ENCODE measurements at regions of chr11 and their contacts with region 1.

Region 1: DNA sequence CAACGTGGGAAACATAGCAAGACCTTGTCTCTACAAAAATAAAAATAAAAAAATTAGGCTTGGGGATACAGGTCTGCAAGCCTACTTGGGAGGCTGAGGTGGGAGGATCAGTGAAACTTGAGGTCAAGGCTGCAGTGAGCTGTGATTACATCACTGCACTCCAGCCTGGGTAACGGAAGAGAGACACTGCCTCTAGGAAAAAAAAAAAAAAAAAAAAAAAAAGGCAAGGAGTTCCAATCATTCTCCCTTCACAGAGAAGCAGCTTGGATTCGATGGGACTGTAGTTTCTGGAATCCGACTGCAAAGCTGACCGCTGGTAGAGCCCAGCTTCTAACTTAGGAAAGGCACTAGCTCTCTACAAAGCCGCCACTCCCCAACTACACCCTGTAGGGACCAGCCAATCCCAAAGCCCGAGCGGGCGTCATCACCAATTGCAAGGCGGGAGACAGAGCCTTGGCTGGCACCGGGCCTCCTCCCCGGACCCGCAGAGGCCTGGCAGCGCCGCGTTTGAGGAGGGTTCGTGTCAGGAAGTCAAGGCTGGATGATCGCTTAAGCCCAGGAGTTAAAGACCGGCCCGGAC is 699 bp upstream of the DDB2 start:
- DNase-seq: peak; percentile 64 to 90 (median 84)
- ATAC-seq: peak; percentile 67
- H3K4me3 ChIP-seq: peak overlapping the region; percentile 65 to 95
- H3K4me3 Mint-ChIP-seq: peak overlapping the region; percentile 96
- H3K27ac ChIP-seq: peak overlapping the region; percentile 85 to 93
- H3K27ac Mint-ChIP-seq: peak overlapping the region; percentile 97
- H3K4me1 ChIP-seq: peaks cover 16% of the 10 kb centered on the region
- H3K4me1 Mint-ChIP-seq: peaks cover 31% of the 10 kb centered on the region
- H3K27me3 ChIP-seq: no peaks in the 10 kb centered on the region
- H3K27me3 Mint-ChIP-seq: no peaks in the 10 kb centered on the region
- CTCF ChIP-seq: no peak

Region 2: DNA sequence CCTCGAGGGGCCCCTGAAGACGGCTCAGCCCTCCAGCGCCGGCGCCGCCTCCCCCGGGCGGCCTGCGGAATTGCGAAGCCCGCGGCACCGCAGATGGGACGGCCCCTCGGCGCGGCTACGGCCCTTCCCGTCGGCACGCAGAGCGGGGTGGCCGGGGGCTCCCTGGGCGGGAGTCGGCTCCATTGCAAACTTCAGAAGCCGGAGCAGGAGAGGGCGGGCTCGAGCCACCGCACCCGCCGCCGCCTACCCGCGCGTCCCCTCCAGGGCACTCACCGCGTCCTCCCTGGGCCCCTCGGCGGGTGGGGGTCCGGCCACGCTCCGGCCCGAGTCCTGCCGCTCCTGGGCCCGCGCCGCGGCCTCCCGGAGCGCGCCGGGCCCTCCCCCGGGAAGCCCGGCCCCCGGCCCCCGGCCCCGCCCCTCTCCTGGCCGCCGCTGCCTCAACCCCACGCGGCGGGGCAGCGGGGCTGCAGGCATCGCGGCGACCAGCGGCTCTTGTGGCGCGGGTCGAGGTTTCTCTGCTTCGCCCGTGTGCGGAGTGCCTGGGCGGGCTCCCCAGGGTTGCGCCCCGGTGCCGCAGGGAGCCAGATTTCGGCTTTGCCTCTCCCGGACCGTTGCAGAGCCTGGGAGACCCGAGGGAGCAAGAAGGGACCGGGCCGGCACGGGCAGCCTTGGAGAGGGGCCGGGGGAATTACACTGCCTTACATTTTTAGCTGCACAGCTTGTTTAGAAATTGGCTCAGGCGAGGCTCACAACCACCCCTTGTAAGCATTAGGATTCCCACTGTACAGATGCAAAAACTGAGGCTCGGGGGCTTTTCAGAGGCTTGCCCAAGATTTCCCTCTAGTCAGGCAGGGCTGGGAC is 27.8 kb before region 1 on chr11 and contains the start of gene PACSIN3:
- CTCF ChIA-PET with region 1: no interaction called
- POLR2A ChIA-PET with region 1: interaction called, 5 read pairs
- intact Hi-C with region 1: loop called in 1 of 2 experiments (anchors 2 kb)
- DNase-seq: peak in 6 of 9 experiments; percentile 20 to 57 (median 43)
- ATAC-seq: peak; percentile 63
- H3K4me3 ChIP-seq: peak within 1 kb of the TSS; percentile 32 to 42
- H3K4me3 Mint-ChIP-seq: peak within 1 kb of the TSS; percentile 77
- H3K27ac ChIP-seq: no peak within 1 kb of the TSS
- H3K27ac Mint-ChIP-seq: no peak within 1 kb of the TSS
- H3K4me1 ChIP-seq: peaks cover 16% of the 10 kb centered on the region
- H3K4me1 Mint-ChIP-seq: peaks cover 9% of the 10 kb centered on the region
- H3K27me3 ChIP-seq: peaks cover 7 to 26% of the 10 kb centered on the region in 2 experiments
- H3K27me3 Mint-ChIP-seq: peaks cover 31% of the 10 kb centered on the region
- CTCF ChIP-seq: no peak
- total RNA-seq, gene PACSIN3: not detected

Region 3: DNA sequence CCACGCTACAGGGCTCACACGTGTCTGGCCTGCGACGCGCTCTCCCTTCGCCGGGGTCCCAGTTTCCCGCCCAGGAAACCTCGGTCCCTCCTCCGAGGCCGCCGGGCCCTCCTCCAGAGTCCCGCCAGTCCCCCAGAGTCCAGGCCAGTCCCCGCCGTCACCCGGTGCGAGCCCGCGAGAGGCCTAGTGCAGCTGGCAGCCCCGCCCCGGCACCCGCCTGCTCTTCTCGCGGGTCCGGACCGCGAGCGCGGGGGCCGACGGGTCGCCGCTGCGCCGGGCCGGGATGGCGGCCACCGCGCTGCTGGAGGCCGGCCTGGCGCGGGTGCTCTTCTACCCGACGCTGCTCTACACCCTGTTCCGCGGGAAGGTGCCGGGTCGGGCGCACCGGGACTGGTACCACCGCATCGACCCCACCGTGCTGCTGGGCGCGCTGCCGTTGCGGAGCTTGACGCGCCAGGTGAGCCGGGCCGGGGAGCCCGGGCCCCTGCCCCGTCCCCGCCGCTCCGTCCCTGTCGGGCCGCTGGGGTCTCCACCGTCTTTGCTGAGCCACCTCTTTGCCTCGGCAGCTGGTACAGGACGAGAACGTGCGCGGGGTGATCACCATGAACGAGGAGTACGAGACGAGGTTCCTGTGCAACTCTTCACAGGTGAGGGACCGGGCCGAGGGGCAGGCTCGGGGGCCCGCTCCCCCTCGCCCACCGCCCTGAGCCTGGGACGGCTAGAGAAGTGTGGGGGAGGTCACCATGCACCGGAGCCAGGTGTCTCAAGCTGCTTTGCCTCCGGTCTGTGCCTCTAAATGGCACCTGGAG is 351.5 kb after region 1 on chr11 and contains the start of gene PTPMT1:
- CTCF ChIA-PET with region 1: no interaction called
- POLR2A ChIA-PET with region 1: no interaction called
- intact Hi-C with region 1: loop called in 1 of 2 experiments (anchors 10 kb)
- DNase-seq: peak; percentile 26 to 79 (median 63)
- ATAC-seq: peak; percentile 85
- H3K4me3 ChIP-seq: peak within 1 kb of the TSS; percentile 76 to 83
- H3K4me3 Mint-ChIP-seq: peak within 1 kb of the TSS; percentile 85
- H3K27ac ChIP-seq: peak within 1 kb of the TSS; percentile 76 to 86
- H3K27ac Mint-ChIP-seq: peak within 1 kb of the TSS; percentile 84
- H3K4me1 ChIP-seq: peaks cover 13% of the 10 kb centered on the region
- H3K4me1 Mint-ChIP-seq: peaks cover 27% of the 10 kb centered on the region
- H3K27me3 ChIP-seq: no peaks in the 10 kb centered on the region
- H3K27me3 Mint-ChIP-seq: no peaks in the 10 kb centered on the region
- CTCF ChIP-seq: no peak
- total RNA-seq, gene PTPMT1: 24.4 to 24.5 TPM

Region 4: GRCh38 chr11:47578524-47579460 is 364.7 kb after region 1 on chr11 and contains the starts of genes KBTBD4 and NDUFS3:
- CTCF ChIA-PET with region 1: no interaction called
- POLR2A ChIA-PET with region 1: no interaction called
- intact Hi-C with region 1: no loop called
- DNase-seq: peak; percentile 74 to 95 (median 89)
- ATAC-seq: peak; percentile 94
- H3K4me3 ChIP-seq: peak within 1 kb of the TSS; percentile 90 to 92
- H3K4me3 Mint-ChIP-seq: peak within 1 kb of the TSS; percentile 99
- H3K27ac ChIP-seq: peak within 1 kb of the TSS; percentile 76 to 84
- H3K27ac Mint-ChIP-seq: peak within 1 kb of the TSS; percentile 97
- H3K4me1 ChIP-seq: peaks cover 31% of the 10 kb centered on the region
- H3K4me1 Mint-ChIP-seq: peaks cover 54% of the 10 kb centered on the region
- H3K27me3 ChIP-seq: no peaks in the 10 kb centered on the region
- H3K27me3 Mint-ChIP-seq: no peaks in the 10 kb centered on the region
- CTCF ChIP-seq: no peak
- total RNA-seq, gene KBTBD4: 31.8 to 32.6 TPM
- total RNA-seq, gene NDUFS3: 159 to 179 TPM

Measured in CD8-positive, alpha-beta T cell (primary cell).